ENCODE measurements at regions of chr2 and their contacts with region 1.

Region 1: DNA sequence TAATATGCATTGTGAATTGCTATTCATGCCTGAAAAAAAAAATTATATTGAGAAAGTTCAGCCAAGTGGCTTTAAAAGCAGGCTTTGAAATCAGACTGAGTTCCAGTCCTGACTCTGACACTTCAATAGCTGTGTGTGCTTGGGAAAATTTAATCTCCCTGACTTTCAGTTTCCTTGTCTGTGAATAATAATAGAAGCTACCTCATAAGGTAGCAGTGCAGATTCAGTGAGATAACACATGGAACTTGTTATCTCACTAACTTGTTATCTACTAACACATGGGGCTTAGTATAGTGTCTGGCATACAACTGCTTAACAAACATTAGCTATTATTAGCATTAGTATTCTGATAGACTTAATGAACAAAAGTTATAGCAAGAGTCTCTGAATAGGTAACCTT is 14.9 kb downstream of the ALS2 start:
- DNase-seq: no peak
- H3K4me3 ChIP-seq: no peak overlapping the region
- H3K27ac ChIP-seq: no peak overlapping the region
- H3K4me1 ChIP-seq: peaks cover 11 to 29% (median 20%) of the 10 kb centered on the region in 4 experiments
- H3K27me3 ChIP-seq: no peaks in the 10 kb centered on the region

Region 2: DNA sequence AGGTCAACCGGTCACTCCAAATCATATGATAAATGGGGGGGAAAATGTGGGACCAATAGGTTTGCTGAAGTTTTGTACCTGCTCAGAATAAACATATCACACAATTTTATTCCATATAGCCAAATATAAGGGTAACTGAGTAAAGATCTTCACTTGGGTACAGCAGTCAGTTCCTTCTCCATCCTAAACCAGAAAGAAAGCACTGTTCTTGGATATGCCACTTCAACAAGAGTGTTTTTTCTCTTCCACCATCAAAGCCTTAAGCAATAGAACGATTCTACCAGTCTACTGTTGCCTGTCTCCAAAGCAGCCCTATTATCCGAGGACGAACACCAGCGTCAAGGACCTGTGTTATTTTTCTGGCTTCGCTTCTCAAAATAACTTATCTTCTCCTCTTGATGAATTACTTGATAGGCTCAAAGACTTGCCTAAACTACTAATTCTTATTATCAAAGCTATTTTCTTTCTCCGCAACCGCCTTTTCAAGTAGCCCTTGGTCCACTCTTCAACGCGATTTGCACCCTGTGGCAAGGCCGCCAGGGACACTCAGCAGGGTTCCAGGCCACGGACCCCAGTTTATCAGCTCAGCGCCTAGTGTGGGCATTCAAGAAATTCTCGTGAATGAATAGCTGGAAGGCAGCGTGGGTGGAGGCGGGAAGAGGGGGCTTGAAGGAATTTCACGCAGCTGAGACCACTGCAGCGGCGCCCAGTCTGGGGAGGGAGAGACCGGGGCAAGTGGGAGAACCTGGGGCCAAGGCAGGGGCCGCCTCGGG is 14.3 kb after region 1 on chr2:
- CTCF ChIA-PET with region 1: interaction called, 10 read pairs
- POLR2A ChIA-PET with region 1: no interaction called
- DNase-seq: peak; percentile 31 to 58 (median 39)
- H3K4me3 ChIP-seq: peak overlapping the region; percentile 82 to 99 (median 91)
- H3K27ac ChIP-seq: peak overlapping the region; percentile 85 to 92
- H3K4me1 ChIP-seq: peaks cover 7 to 75% (median 51%) of the 10 kb centered on the region in 4 experiments
- H3K27me3 ChIP-seq: no peaks in the 10 kb centered on the region